PC-3 (cell line): ENCODE measurements at regions of chr1 and their contacts with region 1.

Region 1: GRCh38 chr1:107572653-107573211 is 392.2 kb downstream of the VAV3 start:
- DNase-seq: peak; percentile 92
- ATAC-seq: peak; percentile 98
- H3K4me3 ChIP-seq: peak overlapping the region; percentile 16; the same call in 1 of the 2 replicates
- H3K27ac ChIP-seq: peak overlapping the region; percentile 67
- H3K4me1 ChIP-seq: peaks cover 36% of the 10 kb centered on the region
- H3K27me3 ChIP-seq: no peaks in the 10 kb centered on the region
- CTCF ChIP-seq: no peak

Region 2: DNA sequence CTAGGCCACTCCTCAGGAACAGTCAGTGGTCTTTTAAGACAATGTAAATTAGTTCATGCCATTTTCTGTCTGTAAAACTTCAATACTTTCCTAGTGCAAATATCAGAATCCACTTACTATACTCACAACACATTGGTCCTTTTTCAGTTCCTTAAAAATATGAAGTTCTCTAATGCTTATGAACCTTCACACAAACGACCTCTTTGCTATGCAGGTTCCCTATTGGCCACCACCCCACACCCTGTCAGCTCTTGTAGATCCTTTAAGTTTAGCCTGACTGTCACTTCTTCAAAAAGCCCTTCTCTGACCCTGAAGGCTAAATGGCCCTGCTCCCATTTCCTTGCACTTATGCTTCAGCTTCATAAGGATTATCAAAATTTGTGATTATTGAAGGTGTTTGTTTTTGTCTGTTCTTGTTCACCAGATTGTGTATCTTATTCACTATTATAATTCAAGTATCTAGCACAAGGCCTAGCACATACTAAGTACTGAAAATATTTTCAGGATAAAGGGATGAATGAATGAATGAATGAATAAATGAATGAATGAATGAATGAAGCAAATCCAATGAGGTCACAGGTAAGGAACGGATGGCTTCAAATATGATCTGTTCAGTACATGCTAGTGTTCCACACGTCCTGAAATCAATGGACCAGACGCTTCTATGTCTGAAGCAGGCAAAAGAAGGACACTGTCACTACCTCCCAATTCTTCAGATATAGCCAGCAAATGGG is 18.3 kb after region 1 on chr1:
- CTCF ChIA-PET with region 1: no interaction called
- POLR2A ChIA-PET with region 1: no interaction called
- intact Hi-C with region 1: loop called (anchors 2 kb)
- DNase-seq: no peak
- ATAC-seq: no peak
- H3K4me3 ChIP-seq: no peak overlapping the region
- H3K27ac ChIP-seq: no peak overlapping the region
- H3K4me1 ChIP-seq: peaks cover 34% of the 10 kb centered on the region
- H3K27me3 ChIP-seq: no peaks in the 10 kb centered on the region
- CTCF ChIP-seq: no peak

Region 3: GRCh38 chr1:107648071-107648470 is 75.3 kb after region 1 on chr1:
- CTCF ChIA-PET with region 1: no interaction called
- POLR2A ChIA-PET with region 1: no interaction called
- intact Hi-C with region 1: loop called (anchors 1 kb)
- DNase-seq: peak; percentile 91
- ATAC-seq: peak; percentile 99
- H3K4me3 ChIP-seq: no peak overlapping the region
- H3K27ac ChIP-seq: peak overlapping the region; percentile 58
- H3K4me1 ChIP-seq: peaks cover 24% of the 10 kb centered on the region
- H3K27me3 ChIP-seq: no peaks in the 10 kb centered on the region
- CTCF ChIP-seq: no peak

Region 4: DNA sequence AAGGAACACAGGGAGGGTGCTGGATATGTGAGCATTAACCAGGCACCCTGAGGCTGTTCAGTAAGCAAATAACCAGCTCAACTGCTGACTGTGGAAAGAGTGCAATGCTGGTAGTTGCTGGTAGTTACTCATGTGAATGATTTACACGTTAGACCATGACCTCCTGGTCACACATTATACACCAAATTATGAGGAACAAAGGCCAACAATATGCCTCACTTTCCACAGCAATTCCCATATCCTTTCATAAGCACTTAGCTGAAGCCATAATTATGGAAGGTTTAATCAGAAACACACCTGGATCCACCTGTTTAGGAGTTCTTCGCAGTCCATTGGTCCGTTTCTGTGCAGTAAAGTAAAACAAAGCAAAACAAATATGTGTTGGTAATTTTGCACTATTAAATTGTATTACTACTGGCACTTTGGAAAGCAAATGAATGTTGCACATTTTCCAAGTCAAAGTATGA is 110.5 kb after region 1 on chr1:
- CTCF ChIA-PET with region 1: no interaction called
- POLR2A ChIA-PET with region 1: no interaction called
- intact Hi-C with region 1: loop called (anchors 2 kb)
- DNase-seq: peak; percentile 85
- ATAC-seq: peak; percentile 89
- H3K4me3 ChIP-seq: peak overlapping the region; percentile 38; the same call in 1 of the 2 replicates
- H3K27ac ChIP-seq: peak overlapping the region; percentile 92
- H3K4me1 ChIP-seq: peaks cover 41% of the 10 kb centered on the region
- H3K27me3 ChIP-seq: no peaks in the 10 kb centered on the region
- CTCF ChIP-seq: no peak